Adrenal gland (tissue), 19 donors: ENCODE measurements at regions of chr6 and their contacts with region 1.

Region 1: DNA sequence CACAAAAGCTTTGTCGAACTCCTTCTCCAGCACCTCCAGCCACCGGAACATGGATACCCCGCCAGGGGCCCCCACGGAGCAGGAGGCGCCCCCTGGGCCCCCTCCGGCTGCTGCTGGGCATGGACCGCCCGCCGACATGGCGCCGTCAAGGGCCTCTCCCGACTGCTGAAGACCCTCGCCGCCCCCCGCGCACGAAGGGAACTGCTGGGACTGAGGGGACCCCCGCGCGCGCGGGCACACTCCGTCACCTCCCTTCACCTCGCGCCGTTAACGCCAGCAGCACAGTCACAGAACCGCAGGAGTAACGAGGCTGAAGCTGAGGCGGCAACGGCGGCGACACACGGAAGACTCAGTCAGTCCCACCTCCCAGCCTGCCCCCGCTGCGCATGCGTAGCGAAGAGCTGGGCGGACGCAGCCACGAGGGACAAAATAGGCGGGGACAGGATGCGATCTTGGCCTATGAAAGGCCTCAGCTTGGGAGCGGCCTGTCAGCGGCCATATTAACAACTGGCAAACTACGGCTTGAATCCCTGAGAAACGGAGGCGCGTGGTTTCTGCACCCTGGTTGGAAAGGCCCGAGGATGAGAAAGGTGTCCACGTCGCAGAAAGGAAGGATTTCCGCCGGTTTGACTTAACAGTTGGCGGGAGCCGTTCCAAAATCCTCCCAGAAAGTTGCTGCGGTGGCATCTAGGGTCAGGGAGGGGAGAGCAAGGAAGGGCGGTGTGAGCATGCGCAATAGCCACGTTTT is at the start of gene GOPC:
- DNase-seq: peak; percentile 95 to 98 (median 97)
- H3K4me3 ChIP-seq: peak within 1 kb of the TSS; percentile 82 to 99 (median 90)
- H3K27ac ChIP-seq: peak within 1 kb of the TSS; percentile 66 to 89 (median 87)
- H3K4me1 ChIP-seq: peaks cover 12 to 28% of the 10 kb centered on the region in 2 donors
- H3K27me3 ChIP-seq: no peaks in the 10 kb centered on the region
- CTCF ChIP-seq: peak in 2 of 6 experiments; percentile 18 to 25
- POLR2A ChIP-seq: peak; percentile 29 to 88
- total RNA-seq, gene GOPC: 13.9 to 35.3 (median 19.8) TPM

Region 2: DNA sequence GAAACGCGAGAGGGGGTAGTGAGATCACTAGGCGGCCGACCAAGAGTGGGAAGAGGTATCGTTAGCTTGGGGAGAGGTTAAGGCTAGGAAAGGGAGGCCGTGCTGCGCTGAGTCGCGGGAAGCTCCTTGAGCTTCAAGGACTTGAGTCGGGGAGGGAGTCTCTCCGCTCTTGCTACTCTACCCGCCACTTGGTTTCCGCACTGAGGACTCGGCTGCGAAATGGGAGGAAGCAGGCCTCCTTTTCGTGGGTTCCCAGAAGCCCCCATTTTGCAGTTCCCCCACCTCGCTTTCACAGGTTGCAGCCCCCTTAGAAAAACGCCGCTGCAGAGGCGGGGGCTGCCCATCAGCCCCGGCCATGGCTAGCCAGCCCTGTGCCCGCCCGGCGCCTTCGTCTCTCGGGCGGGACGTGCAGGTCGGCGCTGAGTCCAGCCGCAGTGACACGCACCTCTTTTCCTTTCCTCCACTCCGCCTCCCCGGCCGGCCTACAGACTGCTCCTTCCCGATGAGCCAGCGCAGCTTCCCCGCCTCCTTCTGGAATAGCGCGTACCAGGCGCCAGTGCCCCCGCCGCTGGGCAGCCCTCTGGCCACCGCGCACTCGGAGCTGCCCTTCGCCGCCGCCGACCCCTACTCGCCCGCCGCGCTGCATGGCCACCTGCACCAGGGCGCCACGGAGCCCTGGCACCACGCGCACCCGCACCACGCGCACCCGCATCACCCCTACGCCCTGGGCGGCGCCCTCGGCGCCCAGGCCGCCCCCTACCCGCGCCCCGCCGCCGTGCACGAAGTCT is 332.1 kb before region 1 on chr6:
- intact Hi-C with region 1: no loop called
- DNase-seq: no peak
- H3K4me3 ChIP-seq: peak overlapping the region in 1 of 4 donors; percentile 38
- H3K27ac ChIP-seq: no peak overlapping the region
- H3K4me1 ChIP-seq: peaks cover 4 to 15% of the 10 kb centered on the region in 2 donors
- H3K27me3 ChIP-seq: peaks cover 72% of the 10 kb centered on the region
- CTCF ChIP-seq: no peak
- POLR2A ChIP-seq: no peak

Region 3: DNA sequence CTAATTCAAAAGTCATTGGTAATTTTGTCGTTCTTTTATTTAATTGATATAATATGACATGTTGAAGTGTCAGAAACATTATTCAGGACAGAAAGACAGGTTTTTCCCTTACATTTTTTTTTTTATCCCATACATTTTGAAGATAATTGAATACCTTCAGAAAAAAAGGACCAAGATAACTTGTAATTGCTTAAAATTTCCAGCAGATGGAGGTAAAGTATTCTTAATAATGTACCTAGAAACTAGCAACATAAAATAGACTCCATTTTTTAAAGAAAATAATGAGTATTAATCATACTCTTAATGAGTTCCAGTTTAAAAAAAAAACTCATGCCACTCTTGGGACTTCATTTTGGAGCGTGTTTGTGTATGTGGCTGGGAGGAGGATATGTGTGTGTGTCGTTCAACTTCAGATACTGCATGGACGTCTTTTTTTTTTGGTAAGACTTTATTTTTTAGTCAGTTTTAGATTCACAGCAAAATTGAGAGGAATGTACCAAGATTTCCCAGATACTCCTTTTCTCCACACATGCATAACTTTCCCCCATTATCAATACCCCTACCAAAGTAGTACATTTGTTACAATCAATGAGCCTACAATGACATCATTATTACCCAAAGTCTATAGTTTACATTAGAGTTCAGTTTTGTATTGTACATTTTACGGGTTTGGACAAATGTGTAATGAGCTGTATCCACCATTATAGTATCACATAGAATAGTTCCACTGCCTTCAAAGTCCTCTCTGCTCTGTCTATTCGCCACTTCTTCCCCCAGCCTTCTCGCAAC is 256.0 kb before region 1 on chr6:
- intact Hi-C with region 1: loop called in 1 of 2 experiments (anchors 5 kb)
- DNase-seq: no peak
- H3K4me3 ChIP-seq: peak overlapping the region in 1 of 4 donors; percentile 29
- H3K27ac ChIP-seq: no peak overlapping the region
- H3K4me1 ChIP-seq: no peaks in the 10 kb centered on the region
- H3K27me3 ChIP-seq: no peaks in the 10 kb centered on the region
- CTCF ChIP-seq: peak in 5 of 6 experiments; percentile 31 to 59 (median 51)
- POLR2A ChIP-seq: no peak

Region 4: GRCh38 chr6:117449549-117450439 is 152.5 kb before region 1 on chr6:
- intact Hi-C with region 1: loop called in 1 of 2 experiments (anchors 5 kb)
- DNase-seq: peak; percentile 30 to 79 (median 59)
- H3K4me3 ChIP-seq: no peak overlapping the region
- H3K27ac ChIP-seq: no peak overlapping the region
- H3K4me1 ChIP-seq: no peaks in the 10 kb centered on the region
- H3K27me3 ChIP-seq: peaks cover 6% of the 10 kb centered on the region
- CTCF ChIP-seq: peak; percentile 58 to 87 (median 78)
- POLR2A ChIP-seq: no peak

Region 5: DNA sequence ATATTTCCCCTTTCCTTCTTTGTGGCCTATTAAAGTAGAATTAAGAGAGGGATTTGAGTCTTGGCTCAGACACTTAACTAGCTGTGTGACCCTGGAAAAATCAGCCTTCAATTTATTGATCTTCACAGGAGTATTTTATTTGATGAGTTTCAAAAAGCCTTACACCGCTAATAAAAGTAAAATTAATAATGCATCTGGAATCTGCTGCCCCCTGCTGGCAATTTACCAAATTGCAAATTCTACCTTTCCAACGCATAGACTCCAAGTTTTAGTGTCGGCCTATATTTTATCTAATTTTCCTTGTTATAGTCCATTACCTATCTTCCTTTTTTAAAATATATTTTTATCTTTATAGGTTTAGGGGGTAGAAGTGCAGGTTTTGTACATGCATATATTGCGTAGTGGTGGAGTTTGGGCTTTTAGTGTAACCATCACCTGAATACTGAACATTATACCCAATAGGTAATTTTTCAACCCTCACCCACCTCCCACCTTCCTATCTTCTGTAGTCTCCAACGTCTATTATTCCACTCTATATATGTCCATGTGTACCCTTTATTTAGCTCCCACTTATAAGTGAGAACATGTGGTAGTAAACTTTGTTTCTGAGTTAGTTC is 46.3 kb before region 1 on chr6:
- intact Hi-C with region 1: loop called in 1 of 2 experiments (anchors 10 kb)
- DNase-seq: peak; percentile 23 to 76 (median 57)
- H3K4me3 ChIP-seq: no peak overlapping the region
- H3K27ac ChIP-seq: no peak overlapping the region
- H3K4me1 ChIP-seq: no peaks in the 10 kb centered on the region
- H3K27me3 ChIP-seq: no peaks in the 10 kb centered on the region
- CTCF ChIP-seq: peak; percentile 72 to 94 (median 80)
- POLR2A ChIP-seq: no peak